Caco-2 (cell line): ENCODE measurements at regions of chr16 and their contacts with region 1.

Region 1: GRCh38 chr16:4245077-4245791 is 3.4 kb upstream of the SRL start:
- DNase-seq: no peak
- H3K4me3 ChIP-seq: no peak overlapping the region
- H3K4me3 Mint-ChIP-seq: no peak overlapping the region
- H3K27ac Mint-ChIP-seq: no peak overlapping the region
- H3K4me1 ChIP-seq: peaks cover 8% of the 10 kb centered on the region
- H3K4me1 Mint-ChIP-seq: peaks cover 6% of the 10 kb centered on the region
- H3K27me3 ChIP-seq: no peaks in the 10 kb centered on the region
- H3K27me3 Mint-ChIP-seq: no peaks in the 10 kb centered on the region
- CTCF ChIP-seq: no peak

Region 2: DNA sequence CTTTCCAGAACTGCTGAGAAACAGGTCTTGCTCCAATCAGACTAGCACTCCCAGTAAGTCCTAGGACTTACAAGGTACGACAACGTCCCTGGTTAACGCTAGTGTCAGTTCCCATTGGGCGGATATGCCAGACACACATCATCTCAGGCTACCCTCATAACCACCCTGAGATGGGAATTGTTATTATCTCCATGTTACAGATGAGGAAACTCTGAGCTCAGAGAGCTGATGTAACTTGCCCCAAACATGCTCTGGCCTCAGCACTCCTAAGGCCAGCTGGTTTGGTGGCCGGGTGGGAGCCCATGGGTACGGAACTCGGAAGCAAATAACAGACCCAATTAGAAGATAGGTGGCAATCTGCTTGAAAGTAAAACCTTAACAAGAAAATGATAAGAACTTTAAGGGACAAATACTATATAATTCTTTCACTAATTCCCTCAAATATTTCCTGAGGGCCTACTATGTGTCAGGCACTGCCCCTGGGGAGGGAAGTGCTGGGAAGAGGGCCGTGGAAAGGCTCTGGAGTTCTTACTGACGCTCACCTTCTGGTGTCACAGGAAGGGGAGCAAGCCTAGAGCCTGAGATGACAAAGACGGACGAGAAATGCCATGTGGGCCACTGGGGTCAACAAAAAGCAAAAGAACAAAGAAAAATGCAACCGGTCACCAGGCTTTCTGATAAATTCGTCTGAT is 371.6 kb before region 1 on chr16:
- CTCF ChIA-PET with region 1: no interaction called
- POLR2A ChIA-PET with region 1: no interaction called
- intact Hi-C with region 1: no loop called
- DNase-seq: no peak
- H3K4me3 ChIP-seq: no peak overlapping the region
- H3K4me3 Mint-ChIP-seq: no peak overlapping the region
- H3K27ac Mint-ChIP-seq: peak overlapping the region; percentile 36
- H3K4me1 ChIP-seq: peaks cover 5% of the 10 kb centered on the region; the same call in 1 of the 2 replicates
- H3K4me1 Mint-ChIP-seq: peaks cover 7% of the 10 kb centered on the region
- H3K27me3 ChIP-seq: no peaks in the 10 kb centered on the region
- H3K27me3 Mint-ChIP-seq: no peaks in the 10 kb centered on the region
- CTCF ChIP-seq: no peak

Region 3: DNA sequence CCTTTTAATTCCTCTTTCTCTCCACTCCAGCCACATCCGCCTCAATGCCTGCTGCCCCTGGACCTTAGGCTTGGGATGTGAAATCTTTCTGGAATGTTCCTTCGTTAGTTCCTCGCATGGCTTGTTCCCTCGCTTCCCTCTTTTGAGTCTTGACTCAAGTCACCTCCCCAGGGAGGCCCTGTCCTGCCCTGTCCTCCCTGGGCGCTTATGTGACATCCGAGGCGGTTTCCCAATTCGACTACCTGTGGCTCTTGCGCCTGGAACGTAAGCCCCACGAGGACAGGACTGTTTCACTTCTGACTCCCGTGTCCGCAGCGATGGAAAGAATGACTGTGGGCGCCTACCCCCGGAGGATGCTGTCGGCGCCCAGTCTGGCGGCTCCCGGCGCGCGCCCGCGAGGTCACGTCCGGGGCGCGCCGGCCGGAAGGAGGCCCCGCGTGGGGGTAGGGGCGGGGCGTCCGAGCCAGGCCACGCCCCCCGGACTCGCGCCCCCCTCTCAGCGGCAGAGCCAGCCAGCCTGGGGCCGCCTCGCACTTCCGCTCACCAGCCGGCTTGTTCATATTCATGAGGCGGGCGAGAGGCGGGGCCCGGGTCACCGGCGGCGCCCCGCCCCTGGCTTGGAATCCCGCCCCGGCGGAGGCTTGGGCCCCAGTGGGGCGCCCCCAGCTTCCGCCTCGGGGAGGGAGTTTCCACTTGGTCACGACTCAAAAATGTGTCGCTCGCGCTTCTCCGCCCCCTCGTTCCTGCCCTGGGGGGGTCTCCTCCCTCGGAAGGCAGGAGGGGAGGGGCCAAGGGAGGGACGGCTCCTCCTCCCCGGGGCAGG is 62.2 kb after region 1 on chr16:
- CTCF ChIA-PET with region 1: interaction called, 10 read pairs
- POLR2A ChIA-PET with region 1: no interaction called
- intact Hi-C with region 1: no loop called
- DNase-seq: peak; percentile 97 to 98
- H3K4me3 ChIP-seq: peak overlapping the region; percentile 78
- H3K4me3 Mint-ChIP-seq: peak overlapping the region; percentile 84
- H3K27ac Mint-ChIP-seq: peak overlapping the region; percentile 84
- H3K4me1 ChIP-seq: peaks cover 14% of the 10 kb centered on the region
- H3K4me1 Mint-ChIP-seq: peaks cover 6% of the 10 kb centered on the region
- H3K27me3 ChIP-seq: no peaks in the 10 kb centered on the region
- H3K27me3 Mint-ChIP-seq: no peaks in the 10 kb centered on the region
- CTCF ChIP-seq: no peak